ENCODE measurements at regions of chr19 and their contacts with region 1.

Region 1: DNA sequence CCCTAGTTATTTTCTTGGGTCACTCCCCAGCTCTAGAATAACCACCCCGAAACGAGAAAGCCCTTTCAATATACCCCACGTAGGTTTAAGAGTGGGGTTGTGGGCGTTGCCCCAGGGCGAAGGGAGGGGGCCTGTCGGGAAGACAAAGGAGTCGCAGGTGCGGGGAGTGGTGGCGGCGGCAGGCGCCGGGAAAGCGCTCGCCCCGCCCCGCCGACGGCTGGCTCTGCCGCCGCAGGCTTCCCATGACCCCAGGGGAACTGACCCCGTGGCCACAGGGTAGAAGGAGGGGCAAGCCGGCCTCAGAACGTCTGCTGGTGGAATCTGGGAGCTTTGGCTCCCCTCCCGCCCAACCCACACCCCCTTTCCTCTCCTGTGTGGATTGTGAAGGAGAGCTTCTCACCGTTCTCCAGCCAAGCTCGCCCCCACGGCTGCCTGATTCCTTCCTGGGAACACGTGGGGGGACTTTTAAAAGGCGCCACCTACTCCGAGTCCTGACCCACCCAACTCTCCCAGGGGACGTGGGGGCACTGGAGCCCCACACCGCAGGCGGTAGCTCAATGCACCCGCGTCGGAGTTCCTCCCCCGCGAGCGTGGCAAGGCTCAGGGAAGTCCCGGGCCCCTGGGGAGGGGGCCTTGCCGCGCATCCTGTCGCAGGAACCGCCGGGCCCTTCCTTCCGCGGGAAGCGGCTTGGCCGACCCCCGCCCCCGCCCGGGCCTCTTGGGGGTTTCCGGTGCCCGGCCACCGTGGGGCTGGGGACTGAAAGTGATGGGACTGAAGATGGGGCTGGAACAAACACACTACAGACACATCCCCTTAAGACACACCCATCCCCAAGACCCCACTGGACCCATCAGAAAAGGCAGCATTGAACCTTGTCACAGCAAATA is 5.5 kb downstream of the IER2 start:
- DNase-seq: peak; percentile 43 to 93 (median 72)
- ATAC-seq: peak; percentile 18
- H3K4me3 ChIP-seq: peak overlapping the region; percentile 83
- H3K4me3 Mint-ChIP-seq: peak overlapping the region; percentile 99
- H3K27ac ChIP-seq: peak overlapping the region; percentile 96 to 97
- H3K27ac Mint-ChIP-seq: peak overlapping the region; percentile 98
- H3K4me1 ChIP-seq: peaks cover 59% of the 10 kb centered on the region
- H3K4me1 Mint-ChIP-seq: peaks cover 46% of the 10 kb centered on the region
- H3K27me3 ChIP-seq: no peaks in the 10 kb centered on the region
- H3K27me3 Mint-ChIP-seq: peaks cover 8% of the 10 kb centered on the region
- CTCF ChIP-seq: no peak

Region 2: GRCh38 chr19:12666265-12667048 is 489.3 kb before region 1 on chr19 and contains the starts of genes MAN2B1 and WDR83:
- CTCF ChIA-PET with region 1: no interaction called
- POLR2A ChIA-PET with region 1: no interaction called
- intact Hi-C with region 1: no loop called
- DNase-seq: peak; percentile 49 to 92 (median 71)
- ATAC-seq: peak; percentile 69
- H3K4me3 ChIP-seq: peak within 1 kb of the TSS; percentile 94
- H3K4me3 Mint-ChIP-seq: peak within 1 kb of the TSS; percentile 92
- H3K27ac ChIP-seq: peak within 1 kb of the TSS; percentile 82 to 85
- H3K27ac Mint-ChIP-seq: peak within 1 kb of the TSS; percentile 98
- H3K4me1 ChIP-seq: peaks cover 66% of the 10 kb centered on the region
- H3K4me1 Mint-ChIP-seq: peaks cover 48% of the 10 kb centered on the region
- H3K27me3 ChIP-seq: no peaks in the 10 kb centered on the region
- H3K27me3 Mint-ChIP-seq: no peaks in the 10 kb centered on the region
- CTCF ChIP-seq: no peak
- total RNA-seq, gene MAN2B1: 95.9 to 109 TPM
- total RNA-seq, gene WDR83: 6.5 to 6.6 TPM

Region 3: DNA sequence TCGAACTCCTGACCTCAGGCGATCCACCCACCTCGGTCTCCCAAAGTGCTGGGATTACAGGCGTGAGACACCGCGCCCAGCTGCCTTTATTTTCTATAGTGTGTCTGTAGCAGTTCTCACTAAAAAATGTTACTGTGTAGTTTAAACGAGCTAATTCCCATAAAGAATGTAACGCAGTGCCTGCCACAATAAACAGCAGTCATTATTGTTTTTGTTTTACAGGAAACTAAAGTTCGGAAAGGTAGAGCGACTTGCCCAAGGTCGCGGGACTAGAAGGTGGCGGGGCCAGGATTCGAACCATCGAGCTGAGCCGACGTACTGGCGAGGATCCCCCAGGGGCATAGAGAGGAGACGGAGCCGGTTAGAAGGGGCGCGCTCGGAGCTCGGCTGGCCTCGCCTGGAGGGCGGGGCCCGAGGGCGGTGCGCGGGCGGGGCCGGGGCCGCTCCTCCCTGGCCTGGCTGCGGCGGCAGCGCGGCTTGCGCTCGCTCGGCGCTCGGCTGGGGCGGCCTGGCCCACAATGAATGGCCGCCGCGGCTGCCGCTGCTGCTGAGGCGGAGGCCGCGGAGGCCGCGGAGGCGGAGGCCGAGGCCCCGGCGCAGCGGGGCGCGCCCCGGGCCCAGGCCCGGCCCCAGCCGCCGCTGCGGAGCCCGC is 37.8 kb before region 1 on chr19 and contains the start of gene NACC1:
- CTCF ChIA-PET with region 1: interaction called, 9 read pairs
- POLR2A ChIA-PET with region 1: interaction called, 60 read pairs
- intact Hi-C with region 1: loop called (anchors 1 to 2 kb)
- DNase-seq: peak; percentile 77 to 94 (median 87)
- ATAC-seq: peak; percentile 79
- H3K4me3 ChIP-seq: peak within 1 kb of the TSS; percentile 99
- H3K4me3 Mint-ChIP-seq: peak within 1 kb of the TSS; percentile 96
- H3K27ac ChIP-seq: peak within 1 kb of the TSS in 1 of 2 donors; percentile 48
- H3K27ac Mint-ChIP-seq: peak within 1 kb of the TSS; percentile 73
- H3K4me1 ChIP-seq: peaks cover 61% of the 10 kb centered on the region
- H3K4me1 Mint-ChIP-seq: peaks cover 66% of the 10 kb centered on the region
- H3K27me3 ChIP-seq: no peaks in the 10 kb centered on the region
- H3K27me3 Mint-ChIP-seq: no peaks in the 10 kb centered on the region
- CTCF ChIP-seq: no peak
- total RNA-seq, gene NACC1: 13.0 to 13.5 TPM

Region 4: GRCh38 chr19:13172068-13172896 is 16.6 kb after region 1 on chr19:
- CTCF ChIA-PET with region 1: interaction called, 27 read pairs
- POLR2A ChIA-PET with region 1: interaction called, 487 read pairs
- intact Hi-C with region 1: loop called (anchors 1 to 2 kb)
- DNase-seq: peak; percentile 49 to 88 (median 84)
- ATAC-seq: peak; percentile 24
- H3K4me3 ChIP-seq: peak overlapping the region; percentile 47
- H3K4me3 Mint-ChIP-seq: peak overlapping the region; percentile 87
- H3K27ac ChIP-seq: peak overlapping the region; percentile 65 to 83
- H3K27ac Mint-ChIP-seq: peak overlapping the region; percentile 99
- H3K4me1 ChIP-seq: peaks cover 85% of the 10 kb centered on the region
- H3K4me1 Mint-ChIP-seq: peaks cover 64% of the 10 kb centered on the region
- H3K27me3 ChIP-seq: no peaks in the 10 kb centered on the region
- H3K27me3 Mint-ChIP-seq: no peaks in the 10 kb centered on the region
- CTCF ChIP-seq: no peak

Region 5: GRCh38 chr19:13181747-13182388 is 26.2 kb after region 1 on chr19:
- CTCF ChIA-PET with region 1: interaction called, 4 read pairs
- POLR2A ChIA-PET with region 1: interaction called, 21 read pairs
- intact Hi-C with region 1: no loop called
- DNase-seq: peak in 3 of 14 experiments; percentile 42 to 57 (median 51)
- ATAC-seq: peak; percentile 64
- H3K4me3 ChIP-seq: no peak overlapping the region
- H3K4me3 Mint-ChIP-seq: peak overlapping the region; percentile 15
- H3K27ac ChIP-seq: no peak overlapping the region
- H3K27ac Mint-ChIP-seq: peak overlapping the region; percentile 58
- H3K4me1 ChIP-seq: peaks cover 40% of the 10 kb centered on the region
- H3K4me1 Mint-ChIP-seq: peaks cover 32% of the 10 kb centered on the region
- H3K27me3 ChIP-seq: no peaks in the 10 kb centered on the region
- H3K27me3 Mint-ChIP-seq: no peaks in the 10 kb centered on the region
- CTCF ChIP-seq: no peak

Region 6: DNA sequence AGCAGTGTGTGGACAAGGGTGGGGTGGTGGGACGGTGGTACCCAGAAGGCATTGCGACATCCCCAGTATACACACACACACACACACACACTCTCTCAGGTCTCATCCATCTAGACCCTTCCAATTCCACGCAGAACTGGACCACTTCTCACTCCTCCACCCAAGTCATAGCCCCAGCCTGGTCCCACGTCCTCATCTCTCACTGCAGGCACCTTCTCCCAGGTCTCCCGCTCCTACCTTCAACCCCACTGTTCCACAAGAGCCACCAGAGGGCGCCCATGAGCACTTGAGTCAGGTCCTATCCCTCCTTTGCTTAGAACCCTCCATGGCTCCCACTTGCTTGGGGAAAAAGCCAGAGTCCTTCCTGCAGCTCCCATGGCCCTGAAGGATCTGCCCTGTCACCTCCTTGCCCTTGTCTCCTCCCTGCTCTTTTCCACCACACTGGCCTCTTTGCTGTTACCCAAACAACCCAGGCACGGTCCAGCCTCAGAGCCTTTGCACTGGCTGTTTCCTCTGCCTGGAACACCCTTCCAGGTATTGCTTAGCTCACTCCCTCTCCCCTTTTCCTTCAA is 57.1 kb after region 1 on chr19:
- CTCF ChIA-PET with region 1: interaction called, 3 read pairs
- POLR2A ChIA-PET with region 1: interaction called, 7 read pairs
- intact Hi-C with region 1: loop called in 1 of 2 experiments (anchors 2 kb)
- DNase-seq: peak; percentile 62 to 89 (median 72)
- ATAC-seq: peak; percentile 50
- H3K4me3 ChIP-seq: no peak overlapping the region
- H3K4me3 Mint-ChIP-seq: peak overlapping the region; percentile 57
- H3K27ac ChIP-seq: no peak overlapping the region
- H3K27ac Mint-ChIP-seq: no peak overlapping the region
- H3K4me1 ChIP-seq: peaks cover 29% of the 10 kb centered on the region
- H3K4me1 Mint-ChIP-seq: peaks cover 28% of the 10 kb centered on the region
- H3K27me3 ChIP-seq: no peaks in the 10 kb centered on the region
- H3K27me3 Mint-ChIP-seq: no peaks in the 10 kb centered on the region
- CTCF ChIP-seq: peak; percentile 61